MCF 10A (cell line): ENCODE measurements at regions of chr1 and their contacts with region 1.

Region 1: GRCh38 chr1:181033799-181034451 is at the start of gene MR1:
- DNase-seq: peak; percentile 94
- H3K4me3 Mint-ChIP-seq: peak within 1 kb of the TSS; percentile 91
- H3K27ac Mint-ChIP-seq: peak within 1 kb of the TSS; percentile 98
- H3K4me1 Mint-ChIP-seq: peaks cover 49% of the 10 kb centered on the region
- H3K27me3 Mint-ChIP-seq: no peaks in the 10 kb centered on the region
- CTCF ChIP-seq: no peak
- total RNA-seq, gene MR1: 33.4 and 46.6 TPM in 2 replicates

Region 2: GRCh38 chr1:180213401-180214170 is 820.3 kb before region 1 on chr1:
- CTCF ChIA-PET with region 1: no interaction called
- POLR2A ChIA-PET with region 1: no interaction called
- intact Hi-C with region 1: no loop called
- DNase-seq: no peak
- H3K4me3 Mint-ChIP-seq: no peak overlapping the region
- H3K27ac Mint-ChIP-seq: no peak overlapping the region
- H3K4me1 Mint-ChIP-seq: no peaks in the 10 kb centered on the region
- H3K27me3 Mint-ChIP-seq: no peaks in the 10 kb centered on the region
- CTCF ChIP-seq: no peak

Region 3: GRCh38 chr1:180805316-180805715 is 228.6 kb before region 1 on chr1:
- CTCF ChIA-PET with region 1: no interaction called
- POLR2A ChIA-PET with region 1: no interaction called
- intact Hi-C with region 1: no loop called
- DNase-seq: no peak
- H3K4me3 Mint-ChIP-seq: no peak overlapping the region
- H3K27ac Mint-ChIP-seq: no peak overlapping the region
- H3K4me1 Mint-ChIP-seq: no peaks in the 10 kb centered on the region
- H3K27me3 Mint-ChIP-seq: no peaks in the 10 kb centered on the region
- CTCF ChIP-seq: no peak

Region 4: GRCh38 chr1:180881806-180882509 is 152.0 kb before region 1 on chr1:
- CTCF ChIA-PET with region 1: interaction called, 3 read pairs
- POLR2A ChIA-PET with region 1: interaction called, 3 read pairs
- intact Hi-C with region 1: loop called (anchors 5 kb)
- DNase-seq: peak; percentile 60
- H3K4me3 Mint-ChIP-seq: no peak overlapping the region
- H3K27ac Mint-ChIP-seq: peak overlapping the region; percentile 44
- H3K4me1 Mint-ChIP-seq: peaks cover 14% of the 10 kb centered on the region
- H3K27me3 Mint-ChIP-seq: no peaks in the 10 kb centered on the region
- CTCF ChIP-seq: peak; percentile 67

Region 5: GRCh38 chr1:180909005-180909414 is 124.9 kb before region 1 on chr1:
- CTCF ChIA-PET with region 1: no interaction called
- POLR2A ChIA-PET with region 1: no interaction called
- intact Hi-C with region 1: no loop called
- DNase-seq: no peak
- H3K4me3 Mint-ChIP-seq: no peak overlapping the region
- H3K27ac Mint-ChIP-seq: no peak overlapping the region
- H3K4me1 Mint-ChIP-seq: no peaks in the 10 kb centered on the region
- H3K27me3 Mint-ChIP-seq: no peaks in the 10 kb centered on the region
- CTCF ChIP-seq: no peak

Region 6: GRCh38 chr1:181016563-181016962 is 17.4 kb before region 1 on chr1:
- CTCF ChIA-PET with region 1: interaction called, 7 read pairs
- POLR2A ChIA-PET with region 1: interaction called, 229 read pairs
- intact Hi-C with region 1: no loop called
- DNase-seq: peak; percentile 59
- H3K4me3 Mint-ChIP-seq: no peak overlapping the region
- H3K27ac Mint-ChIP-seq: no peak overlapping the region
- H3K4me1 Mint-ChIP-seq: peaks cover 33% of the 10 kb centered on the region
- H3K27me3 Mint-ChIP-seq: no peaks in the 10 kb centered on the region
- CTCF ChIP-seq: no peak

Region 7: DNA sequence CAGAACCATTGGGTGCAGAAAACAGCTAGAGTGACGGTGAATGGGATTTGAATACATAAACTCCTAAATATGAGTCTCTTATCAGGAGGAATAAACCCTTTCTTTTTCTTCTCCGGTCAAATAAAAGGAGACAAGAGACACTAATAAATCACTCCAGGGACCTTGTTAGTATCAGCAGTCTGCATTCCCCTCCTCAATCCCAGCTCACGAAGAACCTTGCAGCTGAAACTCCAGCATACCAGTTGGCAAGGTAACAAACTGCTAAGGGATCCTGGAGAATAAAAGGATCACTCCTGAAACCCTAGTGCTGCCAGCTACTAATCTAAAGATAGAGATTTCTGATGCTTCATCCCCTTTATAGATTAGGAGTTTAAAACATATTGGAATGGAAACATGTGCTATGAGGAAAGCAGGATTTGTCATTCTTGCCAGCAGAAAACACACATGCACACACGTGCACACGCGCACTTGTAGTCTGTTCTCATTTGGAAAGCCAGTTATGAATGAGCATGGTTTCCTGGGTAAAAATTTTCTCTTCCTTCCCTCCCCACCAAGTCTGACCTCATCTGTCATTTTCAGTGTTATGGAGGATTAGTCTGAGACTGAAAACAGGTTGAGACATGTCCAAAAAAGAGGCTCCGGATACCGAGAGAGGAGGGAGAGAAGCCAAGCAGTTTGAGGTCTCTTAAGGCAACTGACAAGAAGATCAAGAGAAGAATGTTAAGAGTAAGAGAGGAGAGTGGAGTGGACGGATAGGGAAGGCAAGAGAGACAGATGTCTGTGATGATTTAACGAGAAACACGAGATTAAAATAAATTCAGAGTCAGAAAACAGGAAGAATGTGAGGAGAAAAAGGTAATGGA is 65.5 kb after region 1 on chr1:
- CTCF ChIA-PET with region 1: no interaction called
- POLR2A ChIA-PET with region 1: interaction called, 11 read pairs
- intact Hi-C with region 1: no loop called
- DNase-seq: peak; percentile 94
- H3K4me3 Mint-ChIP-seq: peak overlapping the region; percentile 26
- H3K27ac Mint-ChIP-seq: peak overlapping the region; percentile 72
- H3K4me1 Mint-ChIP-seq: peaks cover 65% of the 10 kb centered on the region
- H3K27me3 Mint-ChIP-seq: no peaks in the 10 kb centered on the region
- CTCF ChIP-seq: no peak

Region 8: GRCh38 chr1:181117638-181118449 is 83.9 kb after region 1 on chr1:
- CTCF ChIA-PET with region 1: interaction called, 6 read pairs
- POLR2A ChIA-PET with region 1: interaction called, 17 read pairs
- intact Hi-C with region 1: no loop called
- DNase-seq: peak; percentile 89
- H3K4me3 Mint-ChIP-seq: no peak overlapping the region
- H3K27ac Mint-ChIP-seq: peak overlapping the region; percentile 77
- H3K4me1 Mint-ChIP-seq: peaks cover 50% of the 10 kb centered on the region
- H3K27me3 Mint-ChIP-seq: no peaks in the 10 kb centered on the region
- CTCF ChIP-seq: no peak

Region 9: GRCh38 chr1:181166377-181167196 is 132.7 kb after region 1 on chr1:
- CTCF ChIA-PET with region 1: interaction called, 16 read pairs
- POLR2A ChIA-PET with region 1: interaction called, 4 read pairs
- intact Hi-C with region 1: loop called (anchors 1 kb)
- DNase-seq: peak; percentile 90
- H3K4me3 Mint-ChIP-seq: no peak overlapping the region
- H3K27ac Mint-ChIP-seq: no peak overlapping the region
- H3K4me1 Mint-ChIP-seq: no peaks in the 10 kb centered on the region
- H3K27me3 Mint-ChIP-seq: no peaks in the 10 kb centered on the region
- CTCF ChIP-seq: peak; percentile 97